ENCODE measurements at regions of chr11 and their contacts with region 1.

Region 1: DNA sequence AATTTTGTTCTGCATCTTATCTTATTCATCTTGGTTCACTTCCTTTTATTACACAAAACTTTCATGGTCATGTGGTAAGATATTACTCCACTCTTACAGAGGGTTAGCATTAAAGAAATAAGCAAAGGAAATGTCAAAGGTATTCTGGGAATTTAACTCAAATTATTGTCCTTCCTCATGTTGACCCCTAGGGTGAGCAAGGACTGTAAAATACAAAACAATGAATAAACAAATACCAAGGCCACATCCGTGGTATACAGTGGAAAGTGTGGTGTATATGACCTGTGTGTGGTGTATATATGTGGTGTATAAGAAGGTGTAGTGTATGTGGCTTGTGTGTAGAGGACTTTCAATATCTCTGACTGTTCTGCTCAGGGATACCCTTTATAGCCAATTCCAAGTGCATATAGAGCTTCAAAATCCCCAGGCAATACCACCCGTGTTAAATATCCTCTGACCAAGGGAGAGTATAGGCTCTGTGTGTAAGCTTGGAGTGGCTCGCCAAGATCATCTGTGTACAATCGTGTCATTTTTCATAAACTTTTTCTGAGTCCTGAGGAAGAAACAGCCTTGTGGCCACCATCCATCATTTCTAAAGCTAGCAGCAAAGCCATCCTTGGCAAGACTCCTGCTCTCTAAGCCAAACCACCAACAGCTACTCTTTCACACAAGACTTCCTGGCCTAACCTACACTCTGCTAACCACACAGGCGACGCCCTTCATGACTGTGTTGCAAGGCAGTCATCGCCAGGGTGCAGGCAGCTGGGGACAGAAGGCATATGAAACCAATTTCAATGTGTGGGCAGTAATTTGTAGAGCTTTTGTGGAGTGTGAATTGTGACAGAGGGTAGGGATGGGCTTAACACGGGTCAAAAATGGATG is 548.0 kb downstream of the ETS1 start:
- DNase-seq: no peak
- H3K4me3 ChIP-seq: no peak overlapping the region
- H3K27ac ChIP-seq: no peak overlapping the region
- H3K4me1 ChIP-seq: no peaks in the 10 kb centered on the region
- H3K27me3 ChIP-seq: peaks cover 17% of the 10 kb centered on the region
- CTCF ChIP-seq: no peak

Region 2: DNA sequence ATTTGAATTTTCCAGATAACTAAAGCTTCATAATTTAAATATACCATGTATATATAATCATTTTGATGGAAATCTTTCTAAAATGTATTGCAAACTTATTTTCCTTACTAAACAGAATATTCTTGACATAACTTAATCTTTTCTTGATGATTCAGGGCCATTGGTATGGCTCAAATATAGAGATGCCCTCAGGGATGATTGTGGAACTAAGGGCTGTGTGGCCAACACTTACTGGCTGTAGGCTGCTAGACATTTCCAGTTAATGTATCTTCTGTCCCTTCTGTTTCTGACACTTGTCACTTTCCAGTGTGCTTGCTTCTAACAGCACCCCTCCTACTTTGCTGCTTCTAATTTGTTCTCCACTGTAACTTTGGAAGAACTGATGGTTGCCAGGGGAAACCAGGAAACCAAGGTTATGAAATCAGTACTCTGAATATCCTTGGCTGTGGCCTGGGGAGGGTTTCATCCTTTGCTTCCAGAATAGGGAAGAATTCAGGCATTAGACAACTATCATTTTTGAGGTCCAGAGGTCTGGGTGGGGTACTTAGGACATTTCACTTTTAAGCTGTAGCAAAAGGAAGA is 149.3 kb before region 1 on chr11:
- intact Hi-C with region 1: no loop called
- DNase-seq: no peak
- H3K4me3 ChIP-seq: no peak overlapping the region
- H3K27ac ChIP-seq: no peak overlapping the region
- H3K4me1 ChIP-seq: no peaks in the 10 kb centered on the region
- H3K27me3 ChIP-seq: no peaks in the 10 kb centered on the region
- CTCF ChIP-seq: no peak

Region 3: GRCh38 chr11:128157423-128158298 is 118.3 kb after region 1 on chr11:
- intact Hi-C with region 1: loop called (anchors 10 kb)
- DNase-seq: no peak
- H3K4me3 ChIP-seq: peak overlapping the region; percentile 45
- H3K27ac ChIP-seq: no peak overlapping the region
- H3K4me1 ChIP-seq: peaks cover 13% of the 10 kb centered on the region
- H3K27me3 ChIP-seq: no peaks in the 10 kb centered on the region
- CTCF ChIP-seq: peak; percentile 85

Measured in left ventricle myocardium inferior (tissue), 1 donor.